ENCODE measurements at regions of chr3 and their contacts with region 1.

Region 1: GRCh38 chr3:193333232-193333631 is 45.3 kb downstream of the ATP13A5 start:
- DNase-seq: no peak
- H3K4me3 ChIP-seq: no peak overlapping the region
- H3K27ac ChIP-seq: no peak overlapping the region
- H3K4me1 ChIP-seq: no peaks in the 10 kb centered on the region
- H3K27me3 ChIP-seq: no peaks in the 10 kb centered on the region
- CTCF ChIP-seq: no peak
- POLR2A ChIP-seq: no peak

Region 2: GRCh38 chr3:192710366-192710765 is 622.9 kb before region 1 on chr3:
- intact Hi-C with region 1: loop called (anchors 5 kb)
- DNase-seq: no peak
- H3K4me3 ChIP-seq: no peak overlapping the region
- H3K27ac ChIP-seq: no peak overlapping the region
- H3K4me1 ChIP-seq: no peaks in the 10 kb centered on the region
- H3K27me3 ChIP-seq: no peaks in the 10 kb centered on the region
- CTCF ChIP-seq: no peak
- POLR2A ChIP-seq: no peak

Region 3: GRCh38 chr3:193347521-193348501 is 14.6 kb after region 1 on chr3:
- intact Hi-C with region 1: no loop called
- DNase-seq: no peak
- H3K4me3 ChIP-seq: no peak overlapping the region
- H3K27ac ChIP-seq: no peak overlapping the region
- H3K4me1 ChIP-seq: no peaks in the 10 kb centered on the region
- H3K27me3 ChIP-seq: no peaks in the 10 kb centered on the region
- CTCF ChIP-seq: no peak
- POLR2A ChIP-seq: no peak

Measured in breast epithelium (tissue), 4 donors.